ENCODE measurements at regions of chr2 and their contacts with region 1.

Region 1: GRCh38 chr2:226256709-226257395 is 542.8 kb downstream of the IRS1 start:
- DNase-seq: no peak
- ATAC-seq: no peak
- H3K4me3 ChIP-seq: no peak overlapping the region
- H3K27ac ChIP-seq: no peak overlapping the region
- H3K4me1 ChIP-seq: no peaks in the 10 kb centered on the region
- H3K27me3 ChIP-seq: no peaks in the 10 kb centered on the region
- CTCF ChIP-seq: no peak
- EP300 ChIP-seq: no peak
- POLR2A ChIP-seq: no peak
- RAD21 ChIP-seq: no peak

Region 2: GRCh38 chr2:226267516-226268289 is 10.9 kb after region 1 on chr2:
- CTCF ChIA-PET with region 1: no interaction called
- POLR2A ChIA-PET with region 1: no interaction called
- RAD21 ChIA-PET with region 1: no interaction called
- SMC1A ChIA-PET with region 1: interaction called, 11 read pairs
- in situ Hi-C with region 1: no loop called
- intact Hi-C with region 1: no loop called
- DNase-seq: no peak
- ATAC-seq: peak; percentile 41; the same call in 2 of the 3 replicates
- H3K4me3 ChIP-seq: no peak overlapping the region
- H3K27ac ChIP-seq: no peak overlapping the region
- H3K4me1 ChIP-seq: no peaks in the 10 kb centered on the region
- H3K27me3 ChIP-seq: no peaks in the 10 kb centered on the region
- CTCF ChIP-seq: no peak
- EP300 ChIP-seq: no peak
- POLR2A ChIP-seq: no peak
- RAD21 ChIP-seq: no peak; the same call in 1 of the 2 replicates

Measured in GM12878 (cell line).